IMR-90 (cell line): ENCODE measurements at regions of chr5 and their contacts with region 1.

Region 1: GRCh38 chr5:97162045-97162444 is 19.6 kb upstream of the LIX1 start:
- DNase-seq: peak; percentile 84
- ATAC-seq: peak; percentile 57
- H3K4me3 ChIP-seq: no peak overlapping the region
- H3K27ac ChIP-seq: no peak overlapping the region
- H3K4me1 ChIP-seq: no peaks in the 10 kb centered on the region
- H3K27me3 ChIP-seq: no peaks in the 10 kb centered on the region
- CTCF ChIP-seq: peak; percentile 89
- POLR2A ChIP-seq: no peak
- RAD21 ChIP-seq: peak; percentile 89

Region 2: GRCh38 chr5:96614110-96614691 is 547.8 kb before region 1 on chr5:
- CTCF ChIA-PET with region 1: no interaction called
- POLR2A ChIA-PET with region 1: no interaction called
- dilution Hi-C with region 1: no loop called
- in situ Hi-C with region 1: loop called (anchors 25 kb)
- intact Hi-C with region 1: loop called (anchors 1 kb)
- DNase-seq: peak; percentile 96
- ATAC-seq: peak; percentile 94
- H3K4me3 ChIP-seq: peak overlapping the region; percentile 1; the same call in 1 of the 2 replicates
- H3K27ac ChIP-seq: peak overlapping the region; percentile 44
- H3K4me1 ChIP-seq: no peaks in the 10 kb centered on the region; the same call in 1 of the 2 replicates
- H3K27me3 ChIP-seq: no peaks in the 10 kb centered on the region
- CTCF ChIP-seq: peak; percentile 71
- POLR2A ChIP-seq: no peak
- RAD21 ChIP-seq: peak; percentile 91

Region 3: DNA sequence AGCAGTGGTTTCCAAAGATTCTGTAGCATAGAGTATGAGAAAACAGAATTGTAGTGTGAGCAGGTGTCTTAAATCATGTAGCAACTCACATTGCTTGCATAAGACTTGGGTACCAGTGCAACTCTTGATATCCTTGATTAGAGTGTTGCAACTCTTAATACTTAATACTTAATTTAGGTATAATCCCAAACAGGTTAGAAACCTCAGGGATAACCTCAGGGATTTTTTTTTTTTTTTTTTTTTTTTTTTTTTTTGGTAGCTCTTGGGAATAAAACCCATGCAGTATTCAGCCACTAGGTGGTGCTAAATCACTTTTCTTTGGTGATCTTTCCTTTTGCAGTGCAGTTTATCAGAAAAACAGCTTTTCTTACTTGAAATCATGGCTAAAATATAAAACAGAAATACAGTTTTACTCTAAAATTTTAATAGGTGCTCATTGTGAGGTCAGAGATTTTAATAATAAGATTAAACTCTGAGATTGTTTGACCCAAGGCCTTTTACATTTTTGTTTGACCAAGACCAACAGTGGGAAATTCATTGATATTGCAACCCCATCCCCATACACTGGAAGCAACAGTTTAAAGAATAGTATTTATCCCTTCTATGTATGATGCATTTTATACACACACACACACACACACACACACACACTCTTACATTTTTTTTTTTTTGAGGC is 409.6 kb before region 1 on chr5:
- CTCF ChIA-PET with region 1: interaction called, 3 read pairs
- POLR2A ChIA-PET with region 1: no interaction called
- dilution Hi-C with region 1: no loop called
- in situ Hi-C with region 1: loop called (anchors 5 kb)
- intact Hi-C with region 1: loop called (anchors 1 kb)
- DNase-seq: peak; percentile 69
- ATAC-seq: peak; percentile 44; the same call in 1 of the 2 replicates
- H3K4me3 ChIP-seq: no peak overlapping the region
- H3K27ac ChIP-seq: no peak overlapping the region
- H3K4me1 ChIP-seq: peaks cover 1% of the 10 kb centered on the region
- H3K27me3 ChIP-seq: no peaks in the 10 kb centered on the region
- CTCF ChIP-seq: peak; percentile 76
- POLR2A ChIP-seq: no peak
- RAD21 ChIP-seq: peak; percentile 68

Region 4: GRCh38 chr5:96868603-96869371 is 293.3 kb before region 1 on chr5:
- CTCF ChIA-PET with region 1: interaction called, 8 read pairs
- POLR2A ChIA-PET with region 1: interaction called, 3 read pairs
- dilution Hi-C with region 1: no loop called
- in situ Hi-C with region 1: loop called (anchors 5 kb)
- intact Hi-C with region 1: loop called (anchors 1 kb)
- DNase-seq: peak; percentile 82
- ATAC-seq: peak; percentile 99
- H3K4me3 ChIP-seq: no peak overlapping the region
- H3K27ac ChIP-seq: no peak overlapping the region
- H3K4me1 ChIP-seq: no peaks in the 10 kb centered on the region
- H3K27me3 ChIP-seq: no peaks in the 10 kb centered on the region
- CTCF ChIP-seq: peak; percentile 97
- POLR2A ChIP-seq: no peak
- RAD21 ChIP-seq: peak; percentile 95

Region 5: GRCh38 chr5:96934708-96935558 is 227.1 kb before region 1 on chr5:
- CTCF ChIA-PET with region 1: no interaction called
- POLR2A ChIA-PET with region 1: no interaction called
- dilution Hi-C with region 1: no loop called
- in situ Hi-C with region 1: no loop called
- intact Hi-C with region 1: loop called (anchors 1 kb)
- DNase-seq: peak; percentile 92
- ATAC-seq: peak; percentile 79
- H3K4me3 ChIP-seq: peak overlapping the region; percentile 68
- H3K27ac ChIP-seq: peak overlapping the region; percentile 92
- H3K4me1 ChIP-seq: no peaks in the 10 kb centered on the region; the same call in 1 of the 2 replicates
- H3K27me3 ChIP-seq: no peaks in the 10 kb centered on the region
- CTCF ChIP-seq: no peak
- POLR2A ChIP-seq: no peak
- RAD21 ChIP-seq: no peak

Region 6: GRCh38 chr5:98827161-98827560 is 1665.1 kb after region 1 on chr5:
- CTCF ChIA-PET with region 1: no interaction called
- POLR2A ChIA-PET with region 1: no interaction called
- dilution Hi-C with region 1: no loop called
- in situ Hi-C with region 1: no loop called
- intact Hi-C with region 1: loop called (anchors 2 kb)
- DNase-seq: peak; percentile 62
- ATAC-seq: peak; percentile 66
- H3K4me3 ChIP-seq: no peak overlapping the region
- H3K27ac ChIP-seq: no peak overlapping the region
- H3K4me1 ChIP-seq: no peaks in the 10 kb centered on the region
- H3K27me3 ChIP-seq: no peaks in the 10 kb centered on the region
- CTCF ChIP-seq: peak; percentile 67
- POLR2A ChIP-seq: no peak; the same call in 1 of the 2 replicates
- RAD21 ChIP-seq: peak; percentile 86